MCF 10A (cell line): ENCODE measurements at regions of chr7 and their contacts with region 1.

Region 1: GRCh38 chr7:139075031-139075652 is 34.4 kb downstream of the ZC3HAV1 start:
- DNase-seq: peak; percentile 79
- H3K4me3 Mint-ChIP-seq: no peak overlapping the region
- H3K27ac Mint-ChIP-seq: peak overlapping the region; percentile 27
- H3K4me1 Mint-ChIP-seq: peaks cover 7% of the 10 kb centered on the region
- H3K27me3 Mint-ChIP-seq: no peaks in the 10 kb centered on the region
- CTCF ChIP-seq: peak; percentile 82

Region 2: DNA sequence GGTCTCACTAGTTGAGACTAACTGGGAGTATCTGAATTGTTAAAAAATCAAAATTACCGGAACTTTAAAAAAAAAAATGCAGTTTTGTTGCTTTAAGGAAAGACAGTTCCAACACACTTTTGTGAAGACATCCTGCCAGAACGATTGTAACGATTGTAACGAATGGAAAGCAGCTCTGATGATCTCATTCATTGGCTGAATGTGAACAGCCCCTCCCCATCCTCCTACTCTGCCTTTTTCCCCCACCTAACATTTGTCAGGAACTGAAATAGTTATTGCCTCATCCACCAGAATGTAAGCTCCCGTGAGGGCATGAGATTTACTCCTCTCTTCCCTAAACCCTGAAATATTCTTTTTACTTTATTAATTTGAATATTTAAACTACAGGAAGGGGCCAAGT is 16.2 kb before region 1 on chr7:
- CTCF ChIA-PET with region 1: interaction called, 37 read pairs
- POLR2A ChIA-PET with region 1: interaction called, 4 read pairs
- intact Hi-C with region 1: no loop called
- DNase-seq: no peak
- H3K4me3 Mint-ChIP-seq: no peak overlapping the region
- H3K27ac Mint-ChIP-seq: no peak overlapping the region
- H3K4me1 Mint-ChIP-seq: no peaks in the 10 kb centered on the region
- H3K27me3 Mint-ChIP-seq: no peaks in the 10 kb centered on the region
- CTCF ChIP-seq: no peak

Region 3: DNA sequence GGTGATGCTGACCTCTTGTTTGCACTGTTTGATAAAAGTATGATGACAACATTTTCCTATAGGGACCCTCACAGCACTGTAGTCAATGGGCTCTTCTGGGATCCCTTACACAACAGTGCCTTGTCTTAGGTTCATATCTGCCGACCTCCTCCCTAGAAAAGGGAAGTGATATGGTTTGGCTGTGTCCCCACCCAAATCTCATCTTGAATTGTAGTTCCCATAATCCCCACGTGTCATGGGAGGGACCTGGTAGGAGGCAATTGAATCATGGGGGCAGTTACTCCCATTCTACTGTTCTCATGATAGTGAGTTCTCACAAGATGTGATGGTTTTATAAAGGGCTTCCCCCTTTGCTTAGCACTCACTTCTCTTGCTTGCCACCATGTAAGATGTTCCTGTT is 11.3 kb after region 1 on chr7:
- CTCF ChIA-PET with region 1: interaction called, 44 read pairs
- POLR2A ChIA-PET with region 1: interaction called, 3 read pairs
- intact Hi-C with region 1: no loop called
- DNase-seq: no peak
- H3K4me3 Mint-ChIP-seq: no peak overlapping the region
- H3K27ac Mint-ChIP-seq: no peak overlapping the region
- H3K4me1 Mint-ChIP-seq: no peaks in the 10 kb centered on the region
- H3K27me3 Mint-ChIP-seq: no peaks in the 10 kb centered on the region
- CTCF ChIP-seq: no peak